B cell (primary cell): ENCODE measurements at regions of chr2 and their contacts with region 1.

Region 1: DNA sequence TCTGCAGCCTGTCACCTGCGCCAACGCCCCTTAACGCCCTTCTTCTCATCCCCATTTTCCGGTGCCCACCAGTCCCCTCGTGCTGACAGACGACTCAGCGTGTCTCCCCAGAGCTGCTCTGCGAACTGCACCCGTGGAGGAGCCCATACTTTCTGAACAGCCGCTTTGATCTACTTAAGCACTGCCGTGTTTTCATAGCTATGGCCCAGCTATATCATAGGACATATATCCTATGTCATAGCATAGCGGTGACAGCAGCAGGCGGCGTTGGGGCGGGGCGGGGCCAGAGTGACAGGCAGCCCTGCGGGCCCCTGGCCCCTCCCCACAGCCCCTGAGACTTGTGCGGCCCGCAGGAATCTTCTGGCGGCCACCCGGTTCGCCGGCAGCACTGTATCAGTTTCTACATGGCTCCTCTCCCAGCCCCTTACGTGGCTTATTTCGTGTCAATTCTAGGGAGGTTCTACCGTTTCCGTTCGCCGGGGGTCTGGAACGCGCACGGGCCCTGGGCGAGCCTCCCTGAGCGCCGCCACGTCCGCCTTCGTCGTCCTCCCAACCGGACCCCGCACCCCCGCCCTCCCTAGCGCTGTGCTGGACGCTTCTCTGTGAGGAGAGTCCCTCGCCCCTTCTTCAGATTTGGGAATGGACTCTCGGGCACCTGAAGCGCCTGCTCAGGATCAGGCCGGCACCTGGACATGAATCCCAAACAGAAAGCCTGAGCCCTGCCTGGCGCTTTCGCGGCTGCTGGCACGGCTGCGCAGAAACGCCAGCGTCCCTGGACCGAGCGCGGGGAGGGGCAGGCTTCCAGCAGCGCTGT is 35.4 kb downstream of the PTPN18 start:
- DNase-seq: peak; percentile 71
- ATAC-seq: peak; percentile 89
- H3K4me3 ChIP-seq: peak overlapping the region; percentile 48 to 72 (median 63)
- H3K4me3 Mint-ChIP-seq: peak overlapping the region; percentile 94
- H3K27ac ChIP-seq: peak overlapping the region; percentile 14 to 21
- H3K27ac Mint-ChIP-seq: peak overlapping the region; percentile 95
- H3K4me1 ChIP-seq: peaks cover 27 to 54% of the 10 kb centered on the region in 2 donors
- H3K4me1 Mint-ChIP-seq: peaks cover 52% of the 10 kb centered on the region
- H3K27me3 ChIP-seq: no peaks in the 10 kb centered on the region
- H3K27me3 Mint-ChIP-seq: no peaks in the 10 kb centered on the region
- CTCF ChIP-seq: no peak

Region 2: DNA sequence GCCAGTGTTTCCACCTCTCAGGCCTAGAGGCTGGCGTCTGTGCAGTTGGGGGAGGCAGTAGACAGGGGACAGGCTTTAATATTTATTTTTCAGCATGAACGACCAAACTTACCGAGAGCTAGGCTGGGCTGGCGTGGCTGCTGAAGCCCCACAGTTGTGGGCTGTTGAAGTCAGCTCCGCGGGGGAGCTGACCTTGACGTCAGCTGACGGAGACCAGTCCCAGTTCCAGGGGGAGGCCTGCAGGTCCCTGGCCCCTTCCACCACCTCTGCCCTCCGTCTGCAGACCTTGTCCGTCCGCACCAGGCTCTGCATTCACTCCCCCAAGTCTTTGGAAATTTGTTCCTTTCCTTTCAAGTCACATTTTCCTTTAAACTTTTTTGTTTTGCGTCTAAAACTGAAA is 159.6 kb before region 1 on chr2:
- CTCF ChIA-PET with region 1: no interaction called
- POLR2A ChIA-PET with region 1: no interaction called
- intact Hi-C with region 1: no loop called
- DNase-seq: no peak
- ATAC-seq: no peak
- H3K4me3 ChIP-seq: no peak overlapping the region
- H3K4me3 Mint-ChIP-seq: no peak overlapping the region
- H3K27ac ChIP-seq: no peak overlapping the region
- H3K27ac Mint-ChIP-seq: no peak overlapping the region
- H3K4me1 ChIP-seq: no peaks in the 10 kb centered on the region
- H3K4me1 Mint-ChIP-seq: no peaks in the 10 kb centered on the region
- H3K27me3 ChIP-seq: no peaks in the 10 kb centered on the region
- H3K27me3 Mint-ChIP-seq: peaks cover 11% of the 10 kb centered on the region
- CTCF ChIP-seq: no peak

Region 3: GRCh38 chr2:130355578-130356431 is 35.5 kb before region 1 on chr2 and contains the start of gene PTPN18:
- CTCF ChIA-PET with region 1: no interaction called
- POLR2A ChIA-PET with region 1: no interaction called
- intact Hi-C with region 1: loop called (anchors 5 kb)
- DNase-seq: peak; percentile 72
- ATAC-seq: peak; percentile 93
- H3K4me3 ChIP-seq: peak within 1 kb of the TSS in 4 of 5 experiments; percentile 50 to 73 (median 69)
- H3K4me3 Mint-ChIP-seq: peak within 1 kb of the TSS; percentile 86
- H3K27ac ChIP-seq: no peak within 1 kb of the TSS
- H3K27ac Mint-ChIP-seq: peak within 1 kb of the TSS; percentile 48
- H3K4me1 ChIP-seq: peaks cover 9 to 31% of the 10 kb centered on the region in 2 donors
- H3K4me1 Mint-ChIP-seq: peaks cover 33% of the 10 kb centered on the region
- H3K27me3 ChIP-seq: peaks cover 0 to 7% (median 3%) of the 10 kb centered on the region in 4 experiments
- H3K27me3 Mint-ChIP-seq: no peaks in the 10 kb centered on the region
- CTCF ChIP-seq: peak; percentile 70
- total RNA-seq, gene PTPN18: 101 and 102 TPM in 2 replicates